MCF 10A (cell line): ENCODE measurements at regions of chr6 and their contacts with region 1.

Region 1: GRCh38 chr6:104859225-104860146 is at the start of gene HACE1:
- DNase-seq: peak; percentile 90
- H3K4me3 Mint-ChIP-seq: peak within 1 kb of the TSS; percentile 88
- H3K27ac Mint-ChIP-seq: peak within 1 kb of the TSS; percentile 29
- H3K4me1 Mint-ChIP-seq: peaks cover 8% of the 10 kb centered on the region
- H3K27me3 Mint-ChIP-seq: no peaks in the 10 kb centered on the region
- CTCF ChIP-seq: no peak
- total RNA-seq, gene HACE1: 5.5 and 8.3 TPM in 2 replicates

Region 2: GRCh38 chr6:104754788-104755409 is 104.6 kb before region 1 on chr6:
- CTCF ChIA-PET with region 1: no interaction called
- POLR2A ChIA-PET with region 1: no interaction called
- intact Hi-C with region 1: no loop called
- DNase-seq: no peak
- H3K4me3 Mint-ChIP-seq: no peak overlapping the region
- H3K27ac Mint-ChIP-seq: no peak overlapping the region
- H3K4me1 Mint-ChIP-seq: no peaks in the 10 kb centered on the region
- H3K27me3 Mint-ChIP-seq: no peaks in the 10 kb centered on the region
- CTCF ChIP-seq: no peak

Region 3: DNA sequence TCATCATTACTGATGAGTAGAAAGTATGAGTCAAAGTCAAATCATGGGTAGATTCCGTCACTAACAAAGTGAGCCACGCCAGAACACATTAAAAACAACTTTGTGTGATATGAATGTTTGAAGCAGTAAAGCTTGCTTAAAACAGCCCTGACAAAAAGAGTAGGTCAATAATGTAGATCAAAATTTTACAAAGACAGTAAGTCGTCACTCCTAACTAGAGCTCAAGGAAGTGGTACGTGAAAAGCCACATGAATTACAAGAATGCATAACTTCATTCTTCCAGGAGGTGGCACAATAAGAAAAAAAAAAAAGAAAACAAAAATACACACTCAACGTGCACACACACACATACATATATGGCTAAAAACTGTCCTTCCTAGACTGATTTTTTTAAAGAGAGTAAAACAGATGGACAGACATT is 69.7 kb before region 1 on chr6:
- CTCF ChIA-PET with region 1: interaction called, 5 read pairs
- POLR2A ChIA-PET with region 1: interaction called, 4 read pairs
- intact Hi-C with region 1: loop called (anchors 2 kb)
- DNase-seq: peak; percentile 53
- H3K4me3 Mint-ChIP-seq: peak overlapping the region; percentile 59
- H3K27ac Mint-ChIP-seq: peak overlapping the region; percentile 95
- H3K4me1 Mint-ChIP-seq: peaks cover 21% of the 10 kb centered on the region
- H3K27me3 Mint-ChIP-seq: no peaks in the 10 kb centered on the region
- CTCF ChIP-seq: peak; percentile 45

Region 4: DNA sequence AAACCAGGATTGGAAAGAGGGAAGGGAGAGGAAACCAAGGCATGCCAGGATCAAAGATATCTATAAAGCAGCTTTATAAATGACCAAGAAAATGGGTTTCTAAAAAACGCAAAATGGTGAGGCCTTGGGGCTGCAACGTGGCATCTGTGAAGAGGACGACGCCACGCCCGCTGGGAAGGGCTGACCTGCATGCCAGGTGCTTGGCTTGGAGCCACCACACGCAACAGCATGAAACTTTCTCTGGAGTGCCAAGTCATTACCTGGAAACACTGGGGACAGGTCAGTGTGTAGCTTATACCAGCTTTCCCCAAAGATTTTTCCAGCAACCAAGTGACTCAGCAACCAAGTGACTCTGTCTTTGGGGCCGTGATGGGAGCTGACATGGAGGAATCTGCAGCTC is 237.8 kb after region 1 on chr6:
- CTCF ChIA-PET with region 1: no interaction called
- POLR2A ChIA-PET with region 1: no interaction called
- intact Hi-C with region 1: no loop called
- DNase-seq: peak; percentile 72
- H3K4me3 Mint-ChIP-seq: no peak overlapping the region
- H3K27ac Mint-ChIP-seq: peak overlapping the region; percentile 91
- H3K4me1 Mint-ChIP-seq: peaks cover 16% of the 10 kb centered on the region
- H3K27me3 Mint-ChIP-seq: no peaks in the 10 kb centered on the region
- CTCF ChIP-seq: no peak